ENCODE measurements at regions of chr2 and their contacts with region 1.

Region 1: GRCh38 chr2:240913810-240914644 is 7.9 kb downstream of the CROCC2 start:
- DNase-seq: no peak
- ATAC-seq: peak; percentile 84
- H3K4me3 ChIP-seq: no peak overlapping the region
- H3K27ac ChIP-seq: no peak overlapping the region
- H3K4me1 ChIP-seq: no peaks in the 10 kb centered on the region
- H3K27me3 ChIP-seq: peaks cover 0 to 3% of the 10 kb centered on the region in 2 experiments
- CTCF ChIP-seq: peak; percentile 76 to 94 (median 88)
- EP300 ChIP-seq: no peak
- POLR2A ChIP-seq: no peak
- RAD21 ChIP-seq: peak; percentile 62

Region 2: GRCh38 chr2:240989451-240990265 is 75.6 kb after region 1 on chr2:
- CTCF ChIA-PET with region 1: no interaction called
- POLR2A ChIA-PET with region 1: no interaction called
- RAD21 ChIA-PET with region 1: no interaction called
- SMC1A ChIA-PET with region 1: no interaction called
- in situ Hi-C with region 1: no loop called
- intact Hi-C with region 1: loop called (anchors 2 kb)
- DNase-seq: no peak
- ATAC-seq: peak; percentile 88
- H3K4me3 ChIP-seq: no peak overlapping the region
- H3K27ac ChIP-seq: no peak overlapping the region
- H3K4me1 ChIP-seq: peaks cover 13% of the 10 kb centered on the region
- H3K27me3 ChIP-seq: no peaks in the 10 kb centered on the region
- CTCF ChIP-seq: peak; percentile 47 to 64 (median 48)
- EP300 ChIP-seq: no peak
- POLR2A ChIP-seq: no peak
- RAD21 ChIP-seq: 0 out of 2 replicates have a peak, but pooled peaks have one; percentile 7

Region 3: DNA sequence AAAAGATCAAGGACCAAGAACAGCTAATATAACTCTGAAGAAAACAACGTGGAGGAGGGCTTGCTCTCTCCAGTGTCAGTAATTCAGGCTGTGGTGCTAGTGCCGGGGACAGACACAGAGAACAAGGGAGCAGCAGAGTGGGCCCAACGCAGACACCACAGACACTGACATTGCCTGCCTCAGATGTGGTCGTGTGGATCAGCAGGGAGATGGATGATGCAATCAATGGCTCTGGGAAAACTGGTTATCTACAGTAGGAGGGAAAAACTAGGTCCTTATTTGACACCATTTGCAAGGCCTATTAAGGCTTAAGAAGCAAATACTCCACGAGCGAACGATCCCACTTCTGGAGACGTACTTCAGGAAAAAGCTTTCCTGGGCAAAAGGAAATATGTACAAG is 365.4 kb after region 1 on chr2:
- CTCF ChIA-PET with region 1: interaction called, 10 read pairs
- POLR2A ChIA-PET with region 1: no interaction called
- RAD21 ChIA-PET with region 1: no interaction called
- SMC1A ChIA-PET with region 1: no interaction called
- in situ Hi-C with region 1: no loop called
- intact Hi-C with region 1: no loop called
- DNase-seq: no peak
- ATAC-seq: no peak
- H3K4me3 ChIP-seq: no peak overlapping the region
- H3K27ac ChIP-seq: no peak overlapping the region; the same call in 1 of the 2 replicates
- H3K4me1 ChIP-seq: peaks cover 12% of the 10 kb centered on the region
- H3K27me3 ChIP-seq: no peaks in the 10 kb centered on the region
- CTCF ChIP-seq: no peak
- EP300 ChIP-seq: no peak
- POLR2A ChIP-seq: no peak
- RAD21 ChIP-seq: no peak